ENCODE measurements at regions of chr6 and their contacts with region 1.

Region 1: DNA sequence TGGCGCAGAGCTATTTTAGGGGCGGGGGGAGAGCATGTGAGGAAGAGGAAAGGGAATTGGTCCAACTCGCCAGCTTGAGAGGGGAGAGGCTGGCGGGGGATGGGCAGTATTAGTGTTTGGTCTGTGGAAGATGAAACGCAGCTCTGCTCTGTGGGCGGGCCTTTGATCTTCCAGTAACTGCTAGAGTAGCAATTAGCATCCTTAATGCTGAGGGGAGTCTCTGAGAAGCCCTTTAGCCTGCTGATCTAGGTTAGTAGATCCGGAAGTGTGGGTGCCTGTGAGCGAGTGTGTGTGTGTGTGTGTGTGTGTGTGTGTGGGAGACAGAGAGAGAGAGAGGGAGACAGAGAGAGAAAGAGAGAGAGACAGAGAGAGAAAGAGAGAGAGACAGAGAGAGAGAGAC is 117.2 kb upstream of the BACH2 start:
- DNase-seq: peak; percentile 93
- ATAC-seq: peak; percentile 85
- H3K4me3 Mint-ChIP-seq: peak overlapping the region; percentile 72
- H3K27ac Mint-ChIP-seq: peak overlapping the region; percentile 97
- H3K4me1 Mint-ChIP-seq: peaks cover 83% of the 10 kb centered on the region
- H3K27me3 Mint-ChIP-seq: peaks cover 3% of the 10 kb centered on the region

Region 2: GRCh38 chr6:90403489-90404381 is 10.1 kb before region 1 on chr6:
- CTCF ChIA-PET with region 1: interaction called, 71 read pairs
- DNase-seq: no peak
- ATAC-seq: no peak
- H3K4me3 Mint-ChIP-seq: no peak overlapping the region
- H3K27ac Mint-ChIP-seq: peak overlapping the region; percentile 77
- H3K4me1 Mint-ChIP-seq: peaks cover 77% of the 10 kb centered on the region
- H3K27me3 Mint-ChIP-seq: no peaks in the 10 kb centered on the region

Region 3: DNA sequence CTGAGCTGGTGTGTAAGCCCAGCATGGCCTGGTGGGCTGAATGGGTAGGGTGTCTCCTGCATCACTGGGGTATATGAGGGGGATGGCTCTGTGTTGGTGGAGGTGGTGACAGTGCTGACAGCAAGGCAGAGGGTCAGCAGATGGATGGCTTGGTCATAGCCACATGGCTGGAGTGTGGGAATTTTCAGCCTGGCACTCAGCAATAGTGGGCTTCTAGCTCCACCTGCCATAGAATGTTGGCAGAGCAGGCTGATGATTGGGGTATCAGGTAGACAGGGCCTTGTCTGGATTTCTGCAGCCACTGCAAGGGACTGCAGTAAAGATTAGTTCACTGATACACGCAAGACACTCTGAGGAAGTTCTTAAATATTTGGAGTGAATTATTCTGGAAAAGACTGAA is 20.2 kb after region 1 on chr6:
- CTCF ChIA-PET with region 1: no interaction called
- DNase-seq: no peak
- ATAC-seq: no peak
- H3K4me3 Mint-ChIP-seq: no peak overlapping the region
- H3K27ac Mint-ChIP-seq: no peak overlapping the region
- H3K4me1 Mint-ChIP-seq: peaks cover 4% of the 10 kb centered on the region
- H3K27me3 Mint-ChIP-seq: no peaks in the 10 kb centered on the region